Left colon (tissue), 2 donors: ENCODE measurements at regions of chr11 and their contacts with region 1.

Region 1: DNA sequence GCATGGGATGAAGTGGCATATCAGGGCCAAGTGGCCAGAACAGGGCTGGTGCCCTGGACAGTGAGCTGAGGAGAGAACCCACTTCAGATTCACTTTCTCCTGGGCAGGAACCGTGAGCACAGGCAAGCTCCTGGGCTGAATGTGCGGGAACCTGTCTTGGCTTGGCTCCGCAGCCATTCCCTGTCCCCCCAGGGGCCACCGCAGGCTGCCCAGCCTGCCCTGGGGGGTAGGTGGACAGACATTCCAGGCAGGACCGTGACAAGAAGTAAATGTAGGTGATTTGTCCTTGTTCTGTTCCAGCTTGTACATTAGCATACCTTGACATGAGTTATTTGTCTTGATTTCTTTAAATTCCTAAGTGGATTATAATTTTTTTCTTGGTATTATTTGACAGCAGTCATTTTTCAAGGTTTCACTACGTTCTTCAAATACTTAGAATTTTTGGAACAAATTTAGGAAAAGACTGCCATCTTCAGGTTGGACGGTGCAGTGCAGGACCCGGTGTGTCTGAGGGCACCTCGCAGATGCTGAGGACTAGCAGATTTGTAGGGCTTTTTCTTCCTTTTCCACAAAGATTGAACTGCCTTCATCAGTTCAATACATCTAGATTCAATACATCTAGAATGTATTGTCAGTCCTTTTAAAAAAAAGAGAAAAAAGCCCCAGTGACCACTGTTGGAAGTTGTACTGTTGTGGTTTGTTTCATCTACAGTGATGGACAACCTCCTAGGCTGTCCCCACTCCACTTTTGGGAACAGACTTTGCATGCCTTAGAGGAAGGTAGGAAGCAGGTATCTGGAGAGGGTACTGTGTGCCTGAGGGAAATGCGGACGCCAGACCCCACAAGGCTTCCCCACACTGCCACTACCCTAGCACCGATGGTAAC is 115.1 kb upstream of the RASSF10 start:
- DNase-seq: peak in 1 of 2 donors; percentile 69
- ATAC-seq: no peak

Region 2: DNA sequence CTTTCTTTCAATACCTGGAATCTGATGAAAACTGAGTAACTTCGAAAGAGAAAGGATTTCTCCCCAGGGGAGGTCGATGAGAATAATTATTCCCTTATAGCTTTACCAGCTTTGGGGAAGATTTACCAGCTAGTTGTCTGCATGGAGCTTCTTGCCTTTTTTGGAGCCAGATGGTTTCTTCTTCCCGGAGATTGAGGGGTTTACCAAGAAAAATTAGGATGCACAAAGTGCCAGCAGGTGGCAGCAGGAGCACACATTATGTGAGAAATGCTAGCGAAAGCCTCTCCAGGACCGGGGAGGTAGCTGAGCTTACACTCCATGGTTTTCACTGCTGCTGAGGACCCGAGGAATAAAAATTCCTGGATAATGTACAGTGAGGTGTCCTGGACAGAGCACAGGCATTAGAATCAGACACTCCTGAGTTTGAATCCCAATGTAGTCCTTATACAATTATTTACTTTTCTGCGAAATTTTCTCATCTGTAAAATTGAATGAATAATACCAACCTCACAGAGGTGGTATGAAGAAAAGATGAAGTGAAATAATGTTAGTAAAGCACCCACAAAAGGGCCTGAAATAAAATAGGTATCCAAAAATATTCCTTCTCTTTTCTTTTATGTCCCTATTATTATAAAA is 562.7 kb before region 1 on chr11:
- intact Hi-C with region 1: loop called in 1 of 2 experiments (anchors 5 kb)
- DNase-seq: peak; percentile 75 to 89
- ATAC-seq: peak; percentile 84

Region 3: GRCh38 chr11:12411806-12412727 is 482.0 kb before region 1 on chr11:
- intact Hi-C with region 1: loop called in 1 of 2 experiments (anchors 5 kb)
- DNase-seq: peak; percentile 63 to 67
- ATAC-seq: peak; percentile 87

Region 4: DNA sequence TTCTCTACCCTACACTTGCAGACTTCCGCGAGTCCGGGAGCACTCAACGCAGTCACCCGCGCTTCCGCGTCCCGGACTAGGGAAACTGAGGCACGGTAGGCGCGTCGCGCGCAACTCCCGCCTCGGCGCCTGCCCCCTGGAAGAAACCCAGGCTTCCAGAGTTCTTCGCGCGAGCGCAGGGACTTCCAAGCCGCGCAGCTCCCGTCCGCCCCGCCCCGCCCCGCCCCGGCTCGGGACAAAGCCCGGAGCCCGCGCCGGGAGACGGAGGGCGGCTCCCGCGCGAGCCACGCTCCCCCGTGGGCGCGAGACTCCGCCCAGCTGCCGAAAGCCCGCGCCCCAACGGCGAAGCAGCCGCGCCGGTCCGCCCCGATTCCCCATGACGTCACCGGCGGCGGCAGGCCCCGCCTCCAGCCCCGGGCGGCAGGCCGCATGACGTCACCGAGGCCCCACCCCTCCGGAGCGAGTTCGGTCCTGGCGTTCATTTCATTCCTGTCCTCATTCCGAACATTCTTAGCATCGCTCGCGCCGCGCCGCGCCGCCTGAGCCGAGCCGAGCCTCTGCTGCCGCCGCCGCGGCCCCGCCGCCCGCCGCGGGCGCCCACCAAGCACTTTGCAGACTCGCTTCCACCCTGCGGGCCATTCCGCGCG is 220.0 kb before region 1 on chr11 and contains the start of gene TEAD1:
- intact Hi-C with region 1: loop called in 1 of 2 experiments (anchors 5 kb)
- DNase-seq: peak; percentile 94 to 97
- ATAC-seq: peak; percentile 89
- total RNA-seq, gene TEAD1: 43.0 to 51.3 TPM

Region 5: GRCh38 chr11:12838463-12839123 is 55.4 kb before region 1 on chr11:
- intact Hi-C with region 1: no loop called
- DNase-seq: no peak
- ATAC-seq: no peak

Region 6: GRCh38 chr11:13376838-13377237 is 482.8 kb after region 1 on chr11:
- intact Hi-C with region 1: no loop called
- DNase-seq: no peak
- ATAC-seq: peak; percentile 7